ENCODE measurements at regions of chr9 and their contacts with region 1.

Region 1: DNA sequence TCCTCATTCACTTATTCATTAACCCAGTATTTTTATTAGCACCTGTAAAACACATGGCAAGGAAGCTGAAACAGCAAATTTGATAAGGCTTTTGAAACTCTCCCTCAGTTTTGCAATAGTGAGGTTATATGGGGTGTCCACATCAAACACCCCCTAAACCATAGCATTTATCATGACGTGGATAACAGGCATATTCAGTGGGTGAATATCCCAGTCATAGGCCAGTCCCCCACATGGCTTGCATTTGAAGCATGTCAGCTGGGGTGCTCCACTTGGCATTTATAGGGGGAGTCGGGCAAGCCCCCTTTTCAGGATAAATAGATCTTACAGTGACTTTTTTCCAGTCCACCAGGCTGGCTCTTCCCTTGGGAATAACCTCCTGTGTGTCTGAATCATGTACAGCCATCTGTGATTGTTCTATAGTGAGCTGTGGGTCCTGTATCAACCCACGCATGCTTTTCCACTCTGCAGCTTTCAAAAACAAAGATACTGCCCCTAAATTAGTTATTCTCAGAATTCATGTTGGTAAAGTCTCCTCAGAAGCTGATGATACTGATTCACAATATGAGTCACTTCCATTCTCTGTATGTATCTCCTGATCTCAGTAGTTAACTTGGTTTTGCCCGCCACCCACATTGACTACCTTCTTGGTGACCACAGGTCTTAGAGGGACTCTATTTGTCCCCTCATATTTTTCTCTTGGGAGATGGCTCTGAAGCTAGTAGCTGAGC is 84.4 kb upstream of the SPIN1 start:
- DNase-seq: peak in 1 of 9 donors; percentile 59
- ATAC-seq: peak; percentile 58
- H3K4me3 ChIP-seq: no peak overlapping the region
- H3K4me3 Mint-ChIP-seq: peak overlapping the region in 1 of 10 donors; percentile 76
- H3K27ac ChIP-seq: no peak overlapping the region
- H3K27ac Mint-ChIP-seq: peak overlapping the region in 1 of 9 donors; percentile 89
- H3K4me1 ChIP-seq: no peaks in the 10 kb centered on the region
- H3K4me1 Mint-ChIP-seq: peaks cover 0 to 53% (median 6%) of the 10 kb centered on the region in 7 donors
- H3K27me3 ChIP-seq: no peaks in the 10 kb centered on the region
- H3K27me3 Mint-ChIP-seq: peaks cover 0 to 4% (median 0%) of the 10 kb centered on the region in 5 donors

Region 2: GRCh38 chr9:88322906-88323566 is 19.1 kb after region 1 on chr9:
- CTCF ChIA-PET with region 1: no interaction called
- POLR2A ChIA-PET with region 1: no interaction called
- intact Hi-C with region 1: loop called in 1 of 2 experiments (anchors 1 kb)
- DNase-seq: peak; percentile 11 to 84 (median 73)
- ATAC-seq: peak; percentile 98
- H3K4me3 ChIP-seq: peak overlapping the region; percentile 2
- H3K4me3 Mint-ChIP-seq: peak overlapping the region; percentile 35 to 84 (median 67)
- H3K27ac ChIP-seq: no peak overlapping the region
- H3K27ac Mint-ChIP-seq: peak overlapping the region; percentile 74 to 97 (median 87)
- H3K4me1 ChIP-seq: peaks cover 16 to 25% of the 10 kb centered on the region in 2 donors
- H3K4me1 Mint-ChIP-seq: peaks cover 26 to 50% (median 36%) of the 10 kb centered on the region in 7 donors
- H3K27me3 ChIP-seq: no peaks in the 10 kb centered on the region
- H3K27me3 Mint-ChIP-seq: no peaks in the 10 kb centered on the region